Activated naive CD4-positive, alpha-beta T cell treated with anti-CD3 and anti-CD28 coated beads for 36 hours (primary cell): ENCODE measurements at regions of chr4 and their contacts with region 1.

Region 1: DNA sequence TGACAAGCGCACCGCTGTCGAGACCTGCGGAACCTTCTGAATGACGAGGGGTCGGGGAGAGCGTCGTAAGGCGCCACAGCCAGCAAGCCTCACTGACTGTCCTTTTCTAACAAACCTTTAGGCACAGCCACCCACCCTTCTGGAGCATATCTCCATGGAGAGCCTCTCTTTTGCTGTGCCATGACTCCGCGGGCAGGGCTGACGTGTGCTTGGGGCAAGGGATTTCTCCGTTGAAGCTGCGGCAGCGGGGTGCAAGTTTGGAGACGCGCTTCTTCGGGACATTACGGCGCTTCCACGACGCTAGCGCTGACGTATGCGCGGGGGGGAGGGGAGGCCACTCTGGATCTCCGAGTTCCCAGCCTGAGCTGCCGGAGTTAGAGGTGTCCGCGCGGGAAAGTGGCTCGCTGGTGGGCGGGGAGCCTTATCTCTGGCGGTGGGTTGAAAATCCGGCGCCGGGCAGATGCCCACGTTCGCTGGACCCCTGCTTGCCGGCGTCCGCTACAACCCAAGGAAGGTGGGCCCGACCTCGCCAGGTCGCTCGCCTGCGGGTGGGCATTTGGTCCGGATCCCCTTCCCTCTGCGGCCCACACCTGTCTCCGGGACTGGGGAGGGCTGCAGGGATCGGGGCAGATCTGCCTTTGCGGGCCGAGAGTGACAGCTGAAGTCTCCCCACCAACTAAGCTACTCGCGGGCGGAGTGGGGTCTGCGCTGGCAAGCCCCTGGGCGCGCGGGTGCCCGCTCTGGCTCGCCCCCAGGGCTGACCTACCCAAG is 543 bp upstream of the SLC10A7 start:
- DNase-seq: peak; percentile 88
- H3K4me3 Mint-ChIP-seq: no peak overlapping the region
- H3K27ac Mint-ChIP-seq: peak overlapping the region; percentile 54
- H3K4me1 Mint-ChIP-seq: peaks cover 24% of the 10 kb centered on the region
- H3K27me3 Mint-ChIP-seq: no peaks in the 10 kb centered on the region

Region 2: GRCh38 chr4:145618932-145619638 is 903.2 kb before region 1 on chr4 and contains the start of gene MMAA:
- CTCF ChIA-PET with region 1: no interaction called
- intact Hi-C with region 1: loop called (anchors 1 kb)
- DNase-seq: peak; percentile 95
- H3K4me3 Mint-ChIP-seq: peak within 1 kb of the TSS; percentile 93
- H3K27ac Mint-ChIP-seq: peak within 1 kb of the TSS; percentile 99
- H3K4me1 Mint-ChIP-seq: peaks cover 47% of the 10 kb centered on the region
- H3K27me3 Mint-ChIP-seq: no peaks in the 10 kb centered on the region
- total RNA-seq, gene MMAA: 15.2 to 19.6 TPM

Region 3: DNA sequence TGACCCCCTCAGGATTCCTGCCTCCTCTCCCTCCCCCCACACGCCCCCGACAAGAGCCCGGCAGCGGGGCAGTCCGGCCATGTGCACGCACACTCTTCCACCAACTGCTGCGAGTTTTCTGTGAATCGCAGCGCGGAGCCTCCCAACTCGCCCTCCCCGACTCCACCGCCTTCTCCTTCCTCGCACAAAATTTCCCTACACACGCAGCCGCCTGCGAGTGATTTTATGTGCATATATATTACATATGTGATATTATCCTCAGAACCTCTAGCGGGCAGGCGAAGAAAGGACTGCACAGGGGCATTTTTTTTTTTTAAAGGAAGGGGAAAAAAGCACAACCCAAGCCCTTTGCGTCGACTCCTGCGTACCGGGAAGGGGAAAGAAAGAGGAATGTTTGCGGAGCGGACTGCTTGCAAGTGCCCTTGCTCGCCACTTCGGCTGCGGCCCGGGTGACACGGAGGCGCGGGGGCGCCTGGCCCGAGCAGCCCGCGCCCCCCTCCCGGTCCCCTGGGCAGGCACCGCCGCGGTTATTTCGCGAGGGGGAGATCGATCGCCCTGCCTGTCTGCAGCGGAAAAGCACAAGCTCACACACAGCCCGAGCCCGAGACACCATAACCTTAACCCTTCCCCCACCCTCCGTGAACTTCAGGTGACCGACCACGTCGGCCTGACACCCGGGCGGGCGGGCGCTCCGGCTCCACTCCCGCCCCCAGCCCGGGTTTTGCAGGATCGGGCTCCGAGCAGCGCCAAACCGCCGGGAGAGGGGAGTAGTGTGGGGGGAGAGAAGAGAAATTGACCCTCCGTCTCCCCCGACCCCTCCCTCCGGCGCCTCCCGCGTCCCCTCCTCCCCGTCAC is 585.9 kb before region 1 on chr4:
- CTCF ChIA-PET with region 1: no interaction called
- intact Hi-C with region 1: loop called (anchors 2 kb)
- DNase-seq: peak; percentile 65
- H3K4me3 Mint-ChIP-seq: peak overlapping the region; percentile 100
- H3K27ac Mint-ChIP-seq: peak overlapping the region; percentile 89
- H3K4me1 Mint-ChIP-seq: peaks cover 51% of the 10 kb centered on the region
- H3K27me3 Mint-ChIP-seq: no peaks in the 10 kb centered on the region

Region 4: GRCh38 chr4:146333187-146333894 is 188.9 kb before region 1 on chr4:
- CTCF ChIA-PET with region 1: no interaction called
- intact Hi-C with region 1: loop called (anchors 2 kb)
- DNase-seq: peak; percentile 41
- H3K4me3 Mint-ChIP-seq: no peak overlapping the region
- H3K27ac Mint-ChIP-seq: no peak overlapping the region
- H3K4me1 Mint-ChIP-seq: peaks cover 7% of the 10 kb centered on the region
- H3K27me3 Mint-ChIP-seq: no peaks in the 10 kb centered on the region

Region 5: GRCh38 chr4:146458594-146458993 is 63.7 kb before region 1 on chr4:
- CTCF ChIA-PET with region 1: no interaction called
- intact Hi-C with region 1: loop called (anchors 1 kb)
- DNase-seq: peak; percentile 15
- H3K4me3 Mint-ChIP-seq: peak overlapping the region; percentile 63
- H3K27ac Mint-ChIP-seq: peak overlapping the region; percentile 91
- H3K4me1 Mint-ChIP-seq: peaks cover 32% of the 10 kb centered on the region
- H3K27me3 Mint-ChIP-seq: no peaks in the 10 kb centered on the region

Region 6: DNA sequence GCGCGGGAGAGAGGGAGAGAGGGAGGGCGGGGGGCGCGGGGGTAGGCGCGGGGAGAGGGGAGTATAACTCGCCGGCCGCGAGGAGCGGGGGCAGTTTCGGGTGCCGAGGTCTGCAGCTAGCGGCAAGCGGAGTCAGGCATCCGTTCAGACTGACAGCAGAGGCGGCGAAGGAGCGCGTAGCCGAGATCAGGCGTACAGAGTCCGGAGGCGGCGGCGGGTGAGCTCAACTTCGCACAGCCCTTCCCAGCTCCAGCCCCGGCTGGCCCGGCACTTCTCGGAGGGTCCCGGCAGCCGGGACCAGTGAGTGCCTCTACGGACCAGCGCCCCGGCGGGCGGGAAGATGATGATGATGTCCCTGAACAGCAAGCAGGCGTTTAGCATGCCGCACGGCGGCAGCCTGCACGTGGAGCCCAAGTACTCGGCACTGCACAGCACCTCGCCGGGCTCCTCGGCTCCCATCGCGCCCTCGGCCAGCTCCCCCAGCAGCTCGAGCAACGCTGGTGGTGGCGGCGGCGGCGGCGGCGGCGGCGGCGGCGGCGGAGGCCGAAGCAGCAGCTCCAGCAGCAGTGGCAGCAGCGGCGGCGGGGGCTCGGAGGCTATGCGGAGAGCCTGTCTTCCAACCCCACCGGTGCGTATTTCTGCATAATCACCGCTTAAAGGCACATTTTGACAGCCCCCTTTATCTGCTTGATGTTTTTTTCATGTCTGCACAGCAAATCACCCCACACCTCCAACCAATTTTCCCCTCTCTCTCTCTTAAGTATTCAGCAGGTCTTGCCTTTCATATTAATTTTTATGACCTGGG is 116.7 kb after region 1 on chr4 and contains the start of gene POU4F2:
- CTCF ChIA-PET with region 1: no interaction called
- intact Hi-C with region 1: loop called (anchors 5 kb)
- DNase-seq: peak; percentile 14
- H3K4me3 Mint-ChIP-seq: peak within 1 kb of the TSS; percentile 19
- H3K27ac Mint-ChIP-seq: no peak within 1 kb of the TSS
- H3K4me1 Mint-ChIP-seq: peaks cover 20% of the 10 kb centered on the region
- H3K27me3 Mint-ChIP-seq: peaks cover 85% of the 10 kb centered on the region
- total RNA-seq, gene POU4F2: not detected

Region 7: GRCh38 chr4:147683717-147684700 is 1161.7 kb after region 1 on chr4 and contains the start of gene PRMT9:
- CTCF ChIA-PET with region 1: no interaction called
- intact Hi-C with region 1: loop called (anchors 5 kb)
- DNase-seq: peak; percentile 91
- H3K4me3 Mint-ChIP-seq: peak within 1 kb of the TSS; percentile 90
- H3K27ac Mint-ChIP-seq: peak within 1 kb of the TSS; percentile 91
- H3K4me1 Mint-ChIP-seq: peaks cover 19% of the 10 kb centered on the region
- H3K27me3 Mint-ChIP-seq: no peaks in the 10 kb centered on the region
- total RNA-seq, gene PRMT9: 7.3 to 8.2 TPM